Heart right ventricle (tissue), 16 donors: ENCODE measurements at regions of chr1 and their contacts with region 1.

Region 1: DNA sequence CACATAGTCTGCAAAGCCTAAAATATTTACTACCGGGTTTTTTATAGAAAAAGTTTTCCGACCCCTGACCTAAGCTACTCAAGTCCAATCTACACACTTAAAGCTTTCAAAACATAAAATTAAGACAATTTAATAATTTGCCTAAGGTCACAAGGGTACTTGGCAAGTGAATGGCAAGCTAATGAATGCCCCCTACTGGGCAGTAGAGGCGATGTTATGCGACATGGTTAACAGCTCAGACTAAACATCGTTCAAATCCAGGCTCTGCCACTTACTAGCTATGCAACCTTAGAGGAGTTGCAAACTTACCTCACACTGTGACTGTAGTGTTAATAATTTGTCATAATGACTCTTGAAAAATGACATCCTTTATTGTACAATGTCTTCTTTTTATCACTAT is 317.2 kb upstream of the NFIA start:
- DNase-seq: no peak
- ATAC-seq: peak in 6 of 8 donors; percentile 31 to 64 (median 50)
- H3K4me3 ChIP-seq: no peak overlapping the region
- H3K27ac ChIP-seq: no peak overlapping the region
- H3K4me1 ChIP-seq: peaks cover 7 to 33% (median 16%) of the 10 kb centered on the region in 9 donors
- H3K27me3 ChIP-seq: no peaks in the 10 kb centered on the region
- CTCF ChIP-seq: peak in 8 of 9 donors; percentile 49 to 75 (median 64)

Region 2: DNA sequence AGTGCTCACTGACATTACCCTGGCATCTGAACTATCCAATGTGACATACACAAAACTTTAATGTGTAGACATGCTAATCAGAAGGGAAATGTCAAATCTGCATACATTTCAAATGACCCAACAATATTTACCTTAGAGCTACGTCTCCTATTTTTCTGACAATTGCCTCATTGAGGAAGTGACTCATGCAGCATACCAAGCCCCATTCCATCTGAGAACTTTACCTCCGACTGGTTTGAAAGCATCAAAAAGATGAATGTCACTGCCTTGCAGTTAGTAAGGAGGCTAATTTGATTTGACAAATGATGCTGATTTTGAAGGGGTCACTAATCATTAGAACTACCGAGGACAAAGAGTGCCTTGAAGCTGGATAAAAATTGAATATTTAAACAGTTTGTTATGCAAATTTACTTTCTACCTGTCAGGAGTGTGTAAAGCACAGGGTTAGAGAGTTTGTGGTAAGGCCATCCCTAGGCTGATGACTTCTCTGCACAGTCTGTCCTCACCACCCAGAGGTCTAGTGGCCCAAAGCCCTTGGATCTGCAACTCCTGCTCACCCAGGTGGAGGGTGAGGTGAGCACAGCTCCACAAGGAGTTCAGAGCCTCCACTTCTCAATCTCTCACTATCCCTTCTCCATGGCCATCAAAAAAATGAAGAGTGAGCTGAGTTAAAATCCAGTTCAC is 191.3 kb before region 1 on chr1:
- intact Hi-C with region 1: loop called in 1 of 10 experiments (anchors 10 kb)
- DNase-seq: no peak
- ATAC-seq: peak in 1 of 8 donors; percentile 33
- H3K4me3 ChIP-seq: no peak overlapping the region
- H3K27ac ChIP-seq: no peak overlapping the region
- H3K4me1 ChIP-seq: peaks cover 0 to 26% (median 9%) of the 10 kb centered on the region in 9 donors
- H3K27me3 ChIP-seq: no peaks in the 10 kb centered on the region
- CTCF ChIP-seq: no peak

Region 3: GRCh38 chr1:60621368-60621851 is 143.8 kb before region 1 on chr1:
- intact Hi-C with region 1: loop called in 1 of 10 experiments (anchors 10 kb)
- DNase-seq: peak in 1 of 2 donors; percentile 11
- ATAC-seq: peak in 5 of 8 donors; percentile 48 to 63 (median 54)
- H3K4me3 ChIP-seq: no peak overlapping the region
- H3K27ac ChIP-seq: no peak overlapping the region
- H3K4me1 ChIP-seq: peaks cover 0 to 30% (median 14%) of the 10 kb centered on the region in 9 donors
- H3K27me3 ChIP-seq: no peaks in the 10 kb centered on the region
- CTCF ChIP-seq: no peak